ENCODE measurements at regions of chr9 and their contacts with region 1.

Region 1: DNA sequence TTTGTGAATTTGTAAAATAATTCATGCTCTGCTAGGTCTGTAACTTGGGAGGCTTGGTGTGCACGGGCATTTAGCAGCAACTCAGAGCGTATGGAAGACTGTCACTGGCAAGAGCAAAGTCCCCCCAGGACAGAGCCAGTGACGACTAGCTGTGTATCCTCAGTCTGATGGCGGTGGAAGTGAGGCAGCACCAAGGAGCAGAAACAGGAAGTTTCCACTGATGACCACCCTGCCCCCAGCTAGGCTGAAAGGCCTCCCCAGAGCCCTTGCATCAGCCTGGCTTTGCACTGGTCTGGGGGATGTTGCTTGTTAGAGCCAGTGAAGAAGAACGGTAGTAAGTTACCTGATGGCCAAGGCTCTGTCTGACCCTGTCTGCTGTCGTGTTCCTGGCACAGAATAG is 66.8 kb upstream of the ABL1 start:
- DNase-seq: no peak
- H3K4me3 ChIP-seq: no peak overlapping the region
- H3K27ac ChIP-seq: no peak overlapping the region
- H3K4me1 ChIP-seq: peaks cover 51% of the 10 kb centered on the region
- H3K27me3 ChIP-seq: no peaks in the 10 kb centered on the region
- CTCF ChIP-seq: no peak

Region 2: GRCh38 chr9:130712564-130713285 is 55.5 kb before region 1 on chr9:
- intact Hi-C with region 1: loop called (anchors 10 kb)
- DNase-seq: peak; percentile 99
- H3K4me3 ChIP-seq: peak overlapping the region; percentile 98
- H3K27ac ChIP-seq: peak overlapping the region; percentile 99
- H3K4me1 ChIP-seq: peaks cover 48% of the 10 kb centered on the region
- H3K27me3 ChIP-seq: no peaks in the 10 kb centered on the region
- CTCF ChIP-seq: peak; percentile 10

Measured in left ventricle myocardium inferior (tissue), 1 donor.